Panc1 (cell line): ENCODE measurements at regions of chrX and their contacts with region 1.

Region 1: DNA sequence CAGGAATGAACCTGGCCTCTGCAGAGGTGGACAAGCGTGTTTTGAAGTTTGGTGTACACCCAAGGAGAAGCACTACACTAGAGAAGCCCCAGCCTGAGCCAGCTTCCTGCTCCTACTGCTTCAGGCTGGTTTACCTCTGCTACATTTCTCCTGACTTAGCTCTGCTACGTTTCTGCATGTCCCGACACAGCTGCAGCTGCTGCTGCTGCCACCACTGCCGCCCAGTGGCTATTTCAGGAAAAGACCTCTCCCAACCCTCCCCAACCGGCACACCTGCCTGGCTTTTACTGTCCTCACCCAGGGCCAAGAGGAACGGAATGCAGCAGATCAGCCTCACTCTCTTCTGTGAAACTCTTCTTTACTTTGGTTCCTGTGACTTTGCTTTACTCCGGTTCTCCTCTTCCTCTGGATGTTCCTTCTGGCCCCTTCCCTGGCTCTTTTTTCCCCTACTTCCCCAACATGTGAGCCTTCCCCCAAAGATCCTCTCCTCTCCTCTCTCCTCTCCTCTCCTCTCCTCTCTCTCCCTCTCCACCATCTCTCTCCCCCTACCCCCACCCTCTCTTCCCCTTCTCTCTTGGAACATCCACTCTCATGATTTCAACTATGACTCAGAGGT is 3.1 kb upstream of the P2RY4 start:
- DNase-seq: peak; percentile 22
- ATAC-seq: peak; percentile 93
- H3K4me3 ChIP-seq: no peak overlapping the region
- H3K27ac ChIP-seq: no peak overlapping the region
- H3K4me1 ChIP-seq: no peaks in the 10 kb centered on the region
- H3K27me3 ChIP-seq: peaks cover 2% of the 10 kb centered on the region; the same call in 1 of the 2 replicates
- CTCF ChIP-seq: peak; percentile 80

Region 2: DNA sequence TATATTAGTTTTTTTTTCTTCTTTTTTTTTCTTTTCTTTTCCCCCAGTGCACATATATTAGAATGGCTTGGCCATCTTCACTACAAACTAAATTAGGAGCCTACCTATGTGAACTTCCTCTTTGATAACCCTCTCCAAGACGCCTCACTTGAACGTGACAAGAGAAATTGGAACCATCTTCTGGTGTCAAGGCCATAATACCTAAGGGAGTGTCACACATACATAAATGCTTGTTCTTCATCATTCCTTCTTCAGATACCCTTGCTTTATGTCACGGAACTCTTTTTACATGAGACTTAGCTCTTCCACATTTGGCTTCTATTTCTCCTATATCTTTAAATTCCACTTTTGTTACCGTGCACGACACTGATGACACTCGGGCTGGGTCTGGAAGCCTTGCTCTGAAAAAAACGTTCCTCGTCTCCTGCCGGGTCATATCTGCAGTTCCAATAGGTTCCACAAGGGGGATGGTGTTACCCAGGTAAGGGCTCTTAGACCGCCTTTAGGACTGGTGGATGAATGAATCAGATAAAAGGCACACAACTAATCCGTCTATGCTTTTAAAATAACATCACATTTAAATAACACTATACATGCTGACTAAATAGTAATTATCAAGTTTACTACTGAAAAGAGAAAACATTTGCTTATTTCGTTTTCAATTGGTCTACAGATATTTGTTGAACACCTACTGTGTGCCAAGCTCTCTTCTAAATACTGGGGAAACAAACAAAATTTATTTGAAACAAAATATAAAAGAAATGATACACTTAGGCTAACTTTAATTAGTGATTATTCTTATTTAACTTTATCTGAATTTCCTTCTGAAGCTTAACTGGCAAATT is 65.9 kb before region 1 on chrX:
- CTCF ChIA-PET with region 1: no interaction called
- POLR2A ChIA-PET with region 1: no interaction called
- in situ Hi-C with region 1: no loop called
- intact Hi-C with region 1: loop called (anchors 5 kb)
- DNase-seq: peak; percentile 18
- ATAC-seq: peak; percentile 91
- H3K4me3 ChIP-seq: no peak overlapping the region
- H3K27ac ChIP-seq: no peak overlapping the region
- H3K4me1 ChIP-seq: no peaks in the 10 kb centered on the region
- H3K27me3 ChIP-seq: no peaks in the 10 kb centered on the region; the same call in none of the 2 replicates
- CTCF ChIP-seq: peak; percentile 81